B cell (primary cell): ENCODE measurements at regions of chr7 and their contacts with region 1.

Region 1: GRCh38 chr7:112898432-112899290 is 108.5 kb upstream of the TMEM168 start:
- DNase-seq: peak; percentile 70
- ATAC-seq: peak; percentile 54
- H3K4me3 ChIP-seq: no peak overlapping the region
- H3K4me3 Mint-ChIP-seq: no peak overlapping the region
- H3K27ac ChIP-seq: no peak overlapping the region
- H3K27ac Mint-ChIP-seq: no peak overlapping the region
- H3K4me1 ChIP-seq: no peaks in the 10 kb centered on the region
- H3K4me1 Mint-ChIP-seq: peaks cover 8% of the 10 kb centered on the region
- H3K27me3 ChIP-seq: no peaks in the 10 kb centered on the region
- H3K27me3 Mint-ChIP-seq: no peaks in the 10 kb centered on the region
- CTCF ChIP-seq: peak; percentile 91

Region 2: GRCh38 chr7:112481833-112482670 is 416.6 kb before region 1 on chr7:
- CTCF ChIA-PET with region 1: interaction called, 4 read pairs
- POLR2A ChIA-PET with region 1: no interaction called
- intact Hi-C with region 1: loop called (anchors 2 kb)
- DNase-seq: no peak
- ATAC-seq: no peak
- H3K4me3 ChIP-seq: no peak overlapping the region
- H3K4me3 Mint-ChIP-seq: no peak overlapping the region
- H3K27ac ChIP-seq: no peak overlapping the region
- H3K27ac Mint-ChIP-seq: no peak overlapping the region
- H3K4me1 ChIP-seq: no peaks in the 10 kb centered on the region
- H3K4me1 Mint-ChIP-seq: no peaks in the 10 kb centered on the region
- H3K27me3 ChIP-seq: no peaks in the 10 kb centered on the region
- H3K27me3 Mint-ChIP-seq: no peaks in the 10 kb centered on the region
- CTCF ChIP-seq: no peak

Region 3: DNA sequence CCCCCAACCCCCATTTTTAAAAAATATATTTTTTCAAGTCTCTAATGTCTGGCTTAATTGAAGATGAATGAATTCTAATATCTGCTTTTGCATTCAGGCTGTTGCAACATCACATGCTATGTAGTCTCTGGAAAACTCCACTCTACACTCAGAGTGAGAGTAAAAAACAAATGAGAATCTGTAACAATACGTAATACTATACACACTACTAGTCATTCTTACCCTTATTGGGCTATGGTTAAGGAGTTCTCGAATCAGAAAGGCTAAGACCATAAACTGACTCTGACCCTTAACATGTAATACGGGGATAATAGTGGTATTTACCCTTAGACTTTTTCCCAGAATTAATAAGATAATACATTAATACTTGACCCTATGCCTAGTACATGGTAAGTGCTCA is 65.6 kb before region 1 on chr7:
- CTCF ChIA-PET with region 1: no interaction called
- POLR2A ChIA-PET with region 1: no interaction called
- intact Hi-C with region 1: no loop called
- DNase-seq: no peak
- ATAC-seq: no peak
- H3K4me3 ChIP-seq: no peak overlapping the region
- H3K4me3 Mint-ChIP-seq: no peak overlapping the region
- H3K27ac ChIP-seq: no peak overlapping the region
- H3K27ac Mint-ChIP-seq: no peak overlapping the region
- H3K4me1 ChIP-seq: no peaks in the 10 kb centered on the region
- H3K4me1 Mint-ChIP-seq: no peaks in the 10 kb centered on the region
- H3K27me3 ChIP-seq: no peaks in the 10 kb centered on the region
- H3K27me3 Mint-ChIP-seq: no peaks in the 10 kb centered on the region
- CTCF ChIP-seq: no peak